Activated CD4-positive, alpha-beta T cell treated with anti-CD3 and anti-CD28 coated beads for 36 hours (primary cell): ENCODE measurements at regions of chr19 and their contacts with region 1.

Region 1: GRCh38 chr19:41206926-41207750 is 11.9 kb upstream of the AXL start:
- DNase-seq: no peak
- ATAC-seq: no peak
- H3K4me3 Mint-ChIP-seq: no peak overlapping the region
- H3K27ac Mint-ChIP-seq: no peak overlapping the region
- H3K4me1 Mint-ChIP-seq: peaks cover 2% of the 10 kb centered on the region
- H3K27me3 Mint-ChIP-seq: no peaks in the 10 kb centered on the region

Region 2: DNA sequence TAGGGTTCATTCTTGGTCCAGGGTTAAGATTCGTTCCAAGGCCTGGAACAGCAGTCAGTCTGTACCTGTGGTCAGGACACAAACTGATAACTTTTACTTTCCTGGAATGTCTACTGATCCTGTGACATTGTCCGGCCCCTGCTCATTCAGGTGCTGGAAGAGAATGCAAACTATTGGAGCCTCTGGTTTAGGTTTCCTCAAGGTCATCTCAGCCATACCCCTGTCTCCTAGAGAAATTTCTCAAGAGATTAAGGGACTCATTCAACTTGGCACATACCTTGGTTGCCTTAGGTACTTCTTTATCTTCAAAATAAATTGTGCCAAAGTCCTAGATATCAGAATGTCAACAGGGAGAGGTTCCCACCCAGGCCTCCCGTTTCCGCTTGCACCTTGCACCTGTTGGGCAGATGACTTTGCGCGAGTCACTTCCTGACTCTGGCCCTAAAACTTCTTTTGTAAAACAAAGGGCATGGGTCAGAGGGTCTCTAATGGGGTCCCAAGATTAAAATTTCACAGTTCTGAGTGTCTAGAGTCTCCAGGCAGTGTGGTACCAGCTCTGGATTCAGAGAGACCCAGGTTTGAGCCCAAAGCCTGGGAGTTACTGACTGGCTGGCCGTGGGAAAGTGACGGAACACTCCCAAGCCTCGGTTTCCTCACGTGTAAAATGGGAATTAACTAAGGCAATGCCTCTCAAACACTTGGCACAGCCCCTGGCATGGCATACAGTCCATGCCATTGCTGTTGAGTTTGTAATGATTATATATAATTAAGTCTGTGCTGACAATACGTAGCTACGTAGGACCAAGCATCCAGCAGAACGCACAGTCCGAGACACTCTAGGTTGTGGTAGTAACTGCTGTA is 40.0 kb before region 1 on chr19:
- CTCF ChIA-PET with region 1: no interaction called
- POLR2A ChIA-PET with region 1: no interaction called
- intact Hi-C with region 1: no loop called
- DNase-seq: no peak
- ATAC-seq: no peak
- H3K4me3 Mint-ChIP-seq: no peak overlapping the region
- H3K27ac Mint-ChIP-seq: no peak overlapping the region
- H3K4me1 Mint-ChIP-seq: no peaks in the 10 kb centered on the region
- H3K27me3 Mint-ChIP-seq: no peaks in the 10 kb centered on the region

Region 3: DNA sequence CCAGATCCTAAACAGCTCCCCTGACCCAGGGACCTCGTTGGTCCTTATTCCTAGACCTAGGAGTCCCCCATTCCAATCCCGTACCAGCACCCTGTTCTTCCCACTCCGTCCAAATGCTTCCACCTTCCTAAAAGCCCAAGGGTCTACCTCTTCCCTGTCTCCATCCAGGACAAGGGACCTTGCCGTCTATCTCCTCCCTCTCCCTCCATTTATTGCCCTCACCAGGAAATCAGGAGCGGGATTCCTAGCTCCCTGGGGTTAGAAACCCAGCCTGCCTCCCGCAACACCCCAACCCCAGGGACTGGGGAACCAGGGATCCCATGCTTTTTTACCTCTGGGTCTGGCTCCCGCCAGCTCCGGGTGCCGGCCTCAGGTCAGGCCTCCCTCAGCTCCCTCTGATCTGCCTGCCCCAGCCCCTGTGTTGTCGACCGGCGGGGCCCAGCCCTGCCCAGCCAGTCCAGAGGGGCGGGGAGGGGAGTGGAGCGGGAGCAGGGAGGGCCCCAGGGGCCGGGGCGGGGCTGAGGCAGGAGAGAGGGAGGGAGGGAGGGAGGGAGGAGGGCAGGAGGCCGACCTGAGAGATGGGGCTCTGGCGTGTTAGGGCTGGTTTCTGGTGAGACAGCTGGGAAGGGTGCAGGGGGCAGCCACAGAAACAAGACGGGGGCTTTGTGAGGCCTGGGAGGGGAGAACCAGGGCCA is 220.0 kb after region 1 on chr19 and contains the start of gene B3GNT8:
- CTCF ChIA-PET with region 1: no interaction called
- POLR2A ChIA-PET with region 1: no interaction called
- intact Hi-C with region 1: loop called in 1 of 2 experiments (anchors 5 kb)
- DNase-seq: peak; percentile 73
- ATAC-seq: peak; percentile 72
- H3K4me3 Mint-ChIP-seq: peak within 1 kb of the TSS; percentile 65
- H3K27ac Mint-ChIP-seq: peak within 1 kb of the TSS; percentile 73
- H3K4me1 Mint-ChIP-seq: peaks cover 18% of the 10 kb centered on the region
- H3K27me3 Mint-ChIP-seq: no peaks in the 10 kb centered on the region
- total RNA-seq, gene B3GNT8: 0.41 TPM in 1 of 2 experiments, not detected in the other